ENCODE measurements at regions of chr9 and their contacts with region 1.

Region 1: DNA sequence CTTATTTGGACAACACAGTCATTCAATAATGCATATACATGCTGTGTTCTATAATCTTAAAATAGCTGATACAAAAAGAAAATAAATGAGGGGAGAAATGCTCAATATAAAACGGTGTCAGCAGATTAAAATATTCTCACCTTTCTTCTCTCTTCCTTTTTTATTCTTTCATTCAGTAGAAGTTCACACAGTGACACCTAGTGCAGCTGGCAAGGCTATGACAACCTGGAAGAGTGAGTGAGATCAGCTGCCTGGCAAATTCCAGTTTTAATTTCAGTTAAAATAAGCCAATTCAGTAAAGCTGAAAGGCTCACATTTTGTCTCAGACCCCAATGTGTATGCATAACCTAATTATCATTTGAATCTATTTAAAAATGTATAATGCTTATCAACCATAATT is 150.3 kb downstream of the RASEF start:
- DNase-seq: no peak
- H3K4me3 ChIP-seq: no peak overlapping the region
- H3K27ac ChIP-seq: no peak overlapping the region
- H3K4me1 ChIP-seq: no peaks in the 10 kb centered on the region
- H3K27me3 ChIP-seq: no peaks in the 10 kb centered on the region
- CTCF ChIP-seq: peak in 2 of 3 experiments; percentile 29 to 38; a peak in 2 of 4 replicates
- EP300 ChIP-seq: no peak
- POLR2A ChIP-seq: no peak
- RAD21 ChIP-seq: peak; percentile 60 to 62

Region 2: DNA sequence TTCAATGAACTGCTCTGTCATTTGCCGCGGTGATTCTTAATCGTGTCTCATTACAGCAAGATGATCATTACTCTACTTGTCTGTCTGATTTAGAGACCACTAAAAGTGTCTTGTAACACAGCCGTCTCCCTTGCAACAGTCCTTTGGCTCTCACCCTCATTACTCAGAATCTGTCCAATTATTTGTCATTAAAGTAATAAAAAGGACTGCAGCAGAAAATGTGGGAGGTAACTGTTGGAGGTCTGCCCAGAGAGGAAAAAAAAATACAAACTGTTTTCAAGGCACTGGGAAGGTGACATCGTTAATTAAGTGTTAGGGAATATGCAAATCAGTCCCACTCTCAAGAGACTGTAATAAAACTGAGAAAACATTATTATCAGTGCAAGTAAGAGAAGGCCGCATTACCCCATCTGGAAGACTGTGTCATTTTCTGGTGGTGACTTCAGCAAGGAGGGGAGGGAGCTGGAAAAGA is 130.7 kb before region 1 on chr9:
- CTCF ChIA-PET with region 1: no interaction called
- POLR2A ChIA-PET with region 1: no interaction called
- DNase-seq: no peak
- H3K4me3 ChIP-seq: no peak overlapping the region
- H3K27ac ChIP-seq: no peak overlapping the region
- H3K4me1 ChIP-seq: no peaks in the 10 kb centered on the region
- H3K27me3 ChIP-seq: no peaks in the 10 kb centered on the region
- CTCF ChIP-seq: no peak
- EP300 ChIP-seq: no peak
- POLR2A ChIP-seq: no peak
- RAD21 ChIP-seq: no peak

Region 3: GRCh38 chr9:82923448-82924249 is 11.0 kb after region 1 on chr9:
- CTCF ChIA-PET with region 1: interaction called, 10 read pairs
- POLR2A ChIA-PET with region 1: no interaction called
- DNase-seq: no peak
- H3K4me3 ChIP-seq: no peak overlapping the region
- H3K27ac ChIP-seq: no peak overlapping the region
- H3K4me1 ChIP-seq: peaks cover 0 to 10% (median 6%) of the 10 kb centered on the region in 4 experiments; a peak in 2 of 7 replicates
- H3K27me3 ChIP-seq: no peaks in the 10 kb centered on the region
- CTCF ChIP-seq: no peak
- EP300 ChIP-seq: no peak
- POLR2A ChIP-seq: no peak
- RAD21 ChIP-seq: no peak